Adrenal gland (tissue), 19 donors: ENCODE measurements at regions of chr3 and their contacts with region 1.

Region 1: GRCh38 chr3:143674100-143674968 is 173.9 kb downstream of the SLC9A9 start:
- DNase-seq: peak; percentile 62 to 87 (median 73)
- H3K4me3 ChIP-seq: no peak overlapping the region
- H3K27ac ChIP-seq: no peak overlapping the region
- H3K4me1 ChIP-seq: peaks cover 3 to 6% of the 10 kb centered on the region in 2 donors
- H3K27me3 ChIP-seq: no peaks in the 10 kb centered on the region
- CTCF ChIP-seq: peak; percentile 70 to 92 (median 80)
- POLR2A ChIP-seq: no peak

Region 2: DNA sequence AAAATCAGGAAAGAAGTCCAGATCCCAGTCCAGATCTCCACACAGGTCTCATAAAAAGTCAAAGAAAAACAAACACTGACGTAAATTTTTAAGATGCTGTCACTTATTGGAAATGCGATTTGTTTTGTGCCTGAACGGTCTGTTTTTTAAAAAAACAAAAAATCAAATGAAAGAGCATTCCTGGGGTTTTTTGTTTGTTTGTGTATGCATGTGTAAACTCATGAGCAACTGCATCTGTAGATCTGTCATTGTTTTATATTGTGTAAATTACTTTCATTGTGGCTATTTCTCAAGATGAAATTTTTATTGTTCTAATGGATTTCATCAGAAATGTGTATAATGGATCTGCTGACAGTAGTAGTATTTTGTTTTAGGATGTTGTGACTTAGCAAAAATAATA is 618.0 kb before region 1 on chr3:
- intact Hi-C with region 1: loop called in 1 of 2 experiments (anchors 10 kb)
- DNase-seq: no peak
- H3K4me3 ChIP-seq: no peak overlapping the region
- H3K27ac ChIP-seq: no peak overlapping the region
- H3K4me1 ChIP-seq: no peaks in the 10 kb centered on the region
- H3K27me3 ChIP-seq: no peaks in the 10 kb centered on the region
- CTCF ChIP-seq: no peak
- POLR2A ChIP-seq: no peak

Region 3: GRCh38 chr3:143443851-143444331 is 230.4 kb before region 1 on chr3:
- intact Hi-C with region 1: no loop called
- DNase-seq: peak; percentile 27 to 73 (median 49)
- H3K4me3 ChIP-seq: no peak overlapping the region
- H3K27ac ChIP-seq: peak overlapping the region in 1 of 5 donors; percentile 65
- H3K4me1 ChIP-seq: peaks cover 0 to 4% of the 10 kb centered on the region in 2 donors
- H3K27me3 ChIP-seq: no peaks in the 10 kb centered on the region
- CTCF ChIP-seq: no peak
- POLR2A ChIP-seq: no peak

Region 4: GRCh38 chr3:143507735-143508580 is 166.4 kb before region 1 on chr3:
- intact Hi-C with region 1: no loop called
- DNase-seq: no peak
- H3K4me3 ChIP-seq: no peak overlapping the region
- H3K27ac ChIP-seq: no peak overlapping the region
- H3K4me1 ChIP-seq: no peaks in the 10 kb centered on the region
- H3K27me3 ChIP-seq: no peaks in the 10 kb centered on the region
- CTCF ChIP-seq: no peak
- POLR2A ChIP-seq: no peak

Region 5: GRCh38 chr3:143727391-143727790 is 53.1 kb after region 1 on chr3:
- intact Hi-C with region 1: no loop called
- DNase-seq: no peak
- H3K4me3 ChIP-seq: no peak overlapping the region
- H3K27ac ChIP-seq: no peak overlapping the region
- H3K4me1 ChIP-seq: peaks cover 0 to 12% of the 10 kb centered on the region in 2 donors
- H3K27me3 ChIP-seq: no peaks in the 10 kb centered on the region
- CTCF ChIP-seq: no peak
- POLR2A ChIP-seq: no peak